MCF 10A (cell line): ENCODE measurements at regions of chr19 and their contacts with region 1.

Region 1: GRCh38 chr19:37594304-37594981 is at the starts of genes ZNF540 and ZNF571:
- DNase-seq: peak; percentile 97
- H3K4me3 Mint-ChIP-seq: peak within 1 kb of the TSS; percentile 96
- H3K27ac Mint-ChIP-seq: peak within 1 kb of the TSS; percentile 98
- H3K4me1 Mint-ChIP-seq: peaks cover 4% of the 10 kb centered on the region
- H3K27me3 Mint-ChIP-seq: no peaks in the 10 kb centered on the region
- CTCF ChIP-seq: no peak
- total RNA-seq, gene ZNF540: 1.1 TPM in 2 replicates
- total RNA-seq, gene ZNF571: 4.2 and 6.3 TPM in 2 replicates

Region 2: DNA sequence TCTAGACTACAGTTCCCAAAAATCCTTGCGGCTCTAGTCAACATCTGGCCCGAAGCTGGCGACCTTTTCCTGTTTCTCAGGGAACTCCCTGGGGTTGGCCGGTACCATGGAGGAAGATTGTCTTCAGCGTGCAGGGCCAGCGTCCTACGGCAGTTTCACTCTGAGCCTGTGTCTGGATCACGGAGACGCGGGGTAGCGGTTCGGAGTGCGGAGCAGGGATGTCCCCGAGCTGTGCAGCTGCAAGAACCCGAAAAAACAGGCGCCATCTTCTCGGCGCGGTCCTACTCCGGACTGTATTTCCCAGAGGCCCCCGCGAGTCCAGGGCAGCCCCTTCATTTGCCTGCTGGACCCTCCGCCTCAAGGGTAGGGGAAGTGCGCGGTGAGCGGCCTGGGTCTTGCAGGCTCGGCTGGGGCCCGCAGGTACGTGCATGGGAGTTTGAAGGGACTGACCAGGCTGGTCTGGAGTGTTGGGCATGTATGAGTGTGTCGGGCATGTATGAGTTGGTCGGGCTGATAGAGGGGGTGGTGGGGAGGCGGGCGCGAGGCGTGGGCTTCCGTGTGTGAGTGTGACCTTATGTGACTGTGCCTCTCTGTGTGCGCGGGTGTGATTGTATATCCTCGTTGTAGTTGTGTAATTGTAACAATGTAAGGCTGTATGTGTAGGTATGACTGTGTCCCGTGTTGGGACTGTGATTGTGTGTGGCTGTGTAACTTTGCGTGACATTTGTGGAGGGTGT is 376.4 kb before region 1 on chr19 and contains the start of gene ZNF383:
- CTCF ChIA-PET with region 1: no interaction called
- POLR2A ChIA-PET with region 1: interaction called, 3 read pairs
- intact Hi-C with region 1: loop called (anchors 10 kb)
- DNase-seq: peak; percentile 92
- H3K4me3 Mint-ChIP-seq: peak within 1 kb of the TSS; percentile 89
- H3K27ac Mint-ChIP-seq: peak within 1 kb of the TSS; percentile 90
- H3K4me1 Mint-ChIP-seq: peaks cover 21% of the 10 kb centered on the region
- H3K27me3 Mint-ChIP-seq: no peaks in the 10 kb centered on the region
- CTCF ChIP-seq: no peak
- total RNA-seq, gene ZNF383: 7.4 and 9.2 TPM in 2 replicates

Region 3: GRCh38 chr19:37466798-37467607 is 127.4 kb before region 1 on chr19 and contains the start of gene ZNF569:
- CTCF ChIA-PET with region 1: no interaction called
- POLR2A ChIA-PET with region 1: interaction called, 42 read pairs
- intact Hi-C with region 1: loop called (anchors 1 kb)
- DNase-seq: peak; percentile 84
- H3K4me3 Mint-ChIP-seq: peak within 1 kb of the TSS; percentile 91
- H3K27ac Mint-ChIP-seq: peak within 1 kb of the TSS; percentile 72
- H3K4me1 Mint-ChIP-seq: no peaks in the 10 kb centered on the region
- H3K27me3 Mint-ChIP-seq: no peaks in the 10 kb centered on the region
- CTCF ChIP-seq: no peak
- total RNA-seq, gene ZNF569: 3.4 and 3.9 TPM in 2 replicates

Region 4: GRCh38 chr19:37719111-37719926 is 124.9 kb after region 1 on chr19 and contains the start of gene ZNF607:
- CTCF ChIA-PET with region 1: interaction called, 3 read pairs
- POLR2A ChIA-PET with region 1: interaction called, 12 read pairs
- intact Hi-C with region 1: no loop called
- DNase-seq: peak; percentile 94
- H3K4me3 Mint-ChIP-seq: peak within 1 kb of the TSS; percentile 96
- H3K27ac Mint-ChIP-seq: peak within 1 kb of the TSS; percentile 85
- H3K4me1 Mint-ChIP-seq: peaks cover 9% of the 10 kb centered on the region
- H3K27me3 Mint-ChIP-seq: no peaks in the 10 kb centered on the region
- CTCF ChIP-seq: peak; percentile 32
- total RNA-seq, gene ZNF607: 3.0 and 3.4 TPM in 2 replicates

Region 5: DNA sequence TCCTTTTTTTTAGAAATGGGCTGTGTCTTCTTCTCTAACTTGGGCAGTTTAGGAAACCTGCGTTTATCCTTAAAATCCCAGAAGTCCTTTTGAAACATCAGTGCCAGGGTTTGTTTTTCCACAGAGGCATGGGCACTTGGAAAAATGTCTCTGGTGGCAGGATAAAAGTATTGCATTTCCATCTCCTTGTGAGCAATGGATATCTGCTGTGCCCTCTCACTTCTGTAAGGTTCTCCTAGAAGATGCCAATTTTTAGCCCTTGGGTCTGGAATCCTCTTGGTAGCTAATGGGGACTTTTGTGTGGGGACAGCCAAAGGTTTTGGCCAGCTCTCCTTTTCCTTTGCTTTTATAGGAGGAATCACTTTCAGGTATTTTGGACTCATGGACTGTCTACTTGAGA is 290.9 kb after region 1 on chr19:
- CTCF ChIA-PET with region 1: no interaction called
- POLR2A ChIA-PET with region 1: no interaction called
- intact Hi-C with region 1: no loop called
- DNase-seq: no peak
- H3K4me3 Mint-ChIP-seq: no peak overlapping the region
- H3K27ac Mint-ChIP-seq: no peak overlapping the region
- H3K4me1 Mint-ChIP-seq: no peaks in the 10 kb centered on the region
- H3K27me3 Mint-ChIP-seq: no peaks in the 10 kb centered on the region
- CTCF ChIP-seq: no peak